WTC11 (cell line): ENCODE measurements at regions of chr19 and their contacts with region 1.

Region 1: DNA sequence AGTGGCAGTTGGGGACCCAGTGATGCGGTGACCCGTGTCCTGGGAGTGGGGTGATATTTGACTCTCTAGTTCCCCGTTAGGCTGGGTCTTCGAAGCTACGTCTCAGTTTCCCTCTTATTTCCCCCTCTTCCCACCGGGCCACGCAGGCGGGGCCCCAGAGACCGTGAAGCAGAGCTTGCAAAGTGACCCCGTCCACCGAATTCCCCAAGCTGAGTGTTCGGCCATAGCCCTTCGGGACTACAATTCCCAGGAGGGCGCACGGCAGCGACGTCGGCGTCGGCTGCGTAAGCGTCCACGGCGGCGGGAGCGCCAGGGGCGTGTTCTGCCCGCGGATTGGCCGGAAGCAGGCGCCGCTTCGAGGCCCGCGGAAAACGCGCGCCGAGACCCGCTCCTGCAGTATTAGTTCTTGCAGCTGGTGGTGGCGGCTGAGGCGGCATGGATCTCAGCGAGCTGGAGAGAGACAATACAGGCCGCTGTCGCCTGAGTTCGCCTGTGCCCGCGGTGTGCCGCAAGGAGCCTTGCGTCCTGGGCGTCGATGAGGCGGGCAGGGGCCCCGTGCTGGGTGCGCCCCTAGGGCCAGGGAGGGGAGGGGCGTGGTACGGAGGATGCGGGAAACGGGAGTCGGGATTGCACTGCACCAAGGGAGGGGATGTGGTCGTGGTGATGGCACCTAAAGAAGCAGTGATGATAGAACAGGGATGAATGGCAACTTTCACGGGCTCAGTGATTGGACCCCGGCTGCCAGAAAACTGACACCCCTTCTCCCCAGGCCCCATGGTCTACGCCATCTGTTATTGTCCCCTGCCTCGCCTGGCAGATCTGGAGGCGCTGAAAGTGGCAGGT is at the start of gene RNASEH2A:
- DNase-seq: peak; percentile 91
- ATAC-seq: peak; percentile 89
- H3K4me3 Mint-ChIP-seq: peak within 1 kb of the TSS; percentile 96
- H3K27ac Mint-ChIP-seq: peak within 1 kb of the TSS; percentile 93
- H3K4me1 Mint-ChIP-seq: peaks cover 18% of the 10 kb centered on the region
- H3K27me3 Mint-ChIP-seq: peaks cover 4% of the 10 kb centered on the region; the same call in 1 of the 2 replicates
- CTCF ChIP-seq: no peak
- total RNA-seq, gene RNASEH2A: 71.3 to 78.2 TPM (median 72.9 TPM) in 3 replicates

Region 2: DNA sequence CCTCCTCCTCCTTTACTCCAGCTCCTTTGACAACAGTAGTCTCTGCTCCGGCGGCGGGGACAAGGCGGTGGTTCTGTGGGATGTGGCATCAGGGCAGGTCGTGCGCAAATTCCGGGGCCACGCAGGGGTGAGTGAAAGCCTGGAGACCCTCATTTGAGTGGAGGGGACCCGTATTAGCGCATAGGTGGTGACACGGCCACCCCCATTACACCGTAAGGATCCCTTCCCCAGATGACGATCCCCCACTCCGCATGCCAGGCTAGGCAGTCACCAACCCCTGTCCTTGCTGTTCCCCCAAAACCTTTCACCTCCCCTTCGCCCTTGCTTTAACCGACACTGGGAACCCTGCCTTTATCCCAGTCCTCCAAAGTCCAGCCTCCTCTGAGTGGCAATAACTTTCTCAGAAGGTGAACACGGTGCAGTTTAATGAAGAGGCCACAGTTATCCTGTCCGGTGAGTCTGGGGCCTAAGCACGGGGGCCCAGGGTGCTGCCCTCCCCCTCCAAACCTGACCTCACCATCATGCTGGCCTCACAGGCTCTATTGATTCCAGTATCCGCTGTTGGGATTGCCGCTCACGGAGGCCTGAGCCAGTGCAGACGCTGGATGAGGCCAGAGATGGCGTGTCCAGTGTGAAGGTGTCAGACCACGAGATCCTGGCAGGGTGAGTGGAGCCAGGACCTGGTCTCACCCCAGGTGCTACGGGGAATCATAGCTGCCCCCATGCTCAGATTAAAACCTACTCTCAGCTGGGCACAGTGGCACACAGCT is 136.1 kb before region 1 on chr19:
- CTCF ChIA-PET with region 1: no interaction called
- POLR2A ChIA-PET with region 1: no interaction called
- DNase-seq: no peak
- ATAC-seq: no peak
- H3K4me3 Mint-ChIP-seq: peak overlapping the region; percentile 98
- H3K27ac Mint-ChIP-seq: peak overlapping the region; percentile 100
- H3K4me1 Mint-ChIP-seq: peaks cover 30% of the 10 kb centered on the region
- H3K27me3 Mint-ChIP-seq: no peaks in the 10 kb centered on the region
- CTCF ChIP-seq: no peak

Region 3: DNA sequence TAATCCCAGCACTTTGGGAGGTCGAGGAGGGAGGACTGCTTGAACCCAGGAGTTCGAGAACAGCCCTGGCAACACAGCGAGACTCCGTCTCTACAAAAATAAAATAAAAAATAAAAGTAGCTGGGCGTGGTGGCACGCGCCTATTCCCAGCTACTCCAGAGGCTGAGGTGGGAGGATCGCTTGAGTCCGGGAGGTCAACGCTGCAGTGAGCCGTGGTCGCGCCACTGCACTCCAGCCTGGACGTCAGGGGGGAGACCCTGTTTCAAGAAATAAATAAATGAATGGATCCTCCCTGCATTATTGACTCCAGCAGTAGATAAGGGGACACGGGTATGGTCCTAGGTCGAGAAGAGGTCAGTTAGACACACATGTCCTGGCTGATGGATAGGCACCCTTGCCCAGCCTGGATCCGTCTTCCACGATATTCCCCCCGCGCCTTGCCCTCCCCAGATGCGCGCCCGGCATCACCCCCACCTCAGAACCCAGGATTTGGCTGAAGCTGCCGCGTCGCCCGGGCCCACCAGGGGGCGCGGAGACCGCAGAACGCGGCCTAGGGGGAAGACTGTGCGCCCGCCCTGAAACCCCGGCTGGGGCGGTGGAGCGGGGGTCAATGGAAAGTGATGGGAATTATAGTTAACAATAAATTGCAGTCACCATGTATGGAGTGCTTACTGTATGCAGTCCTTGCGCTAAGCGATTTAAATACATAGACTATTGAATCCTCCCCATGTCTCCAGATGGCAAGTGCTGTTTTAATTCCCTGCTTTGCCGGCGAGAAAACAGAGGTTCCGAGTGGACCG is 29.0 kb before region 1 on chr19:
- CTCF ChIA-PET with region 1: interaction called, 12 read pairs
- POLR2A ChIA-PET with region 1: interaction called, 3 read pairs
- DNase-seq: peak; percentile 91
- ATAC-seq: peak; percentile 39
- H3K4me3 Mint-ChIP-seq: peak overlapping the region; percentile 79
- H3K27ac Mint-ChIP-seq: peak overlapping the region; percentile 49
- H3K4me1 Mint-ChIP-seq: peaks cover 21% of the 10 kb centered on the region
- H3K27me3 Mint-ChIP-seq: no peaks in the 10 kb centered on the region; the same call in 1 of the 2 replicates
- CTCF ChIP-seq: peak; percentile 74

Region 4: GRCh38 chr19:12789904-12790619 is 16.4 kb before region 1 on chr19:
- CTCF ChIA-PET with region 1: interaction called, 17 read pairs
- POLR2A ChIA-PET with region 1: interaction called, 10 read pairs
- DNase-seq: peak; percentile 98
- ATAC-seq: peak; percentile 63
- H3K4me3 Mint-ChIP-seq: peak overlapping the region; percentile 84
- H3K27ac Mint-ChIP-seq: peak overlapping the region; percentile 79; the same call in 1 of the 2 replicates
- H3K4me1 Mint-ChIP-seq: peaks cover 29% of the 10 kb centered on the region
- H3K27me3 Mint-ChIP-seq: peaks cover 32% of the 10 kb centered on the region
- CTCF ChIP-seq: no peak

Region 5: DNA sequence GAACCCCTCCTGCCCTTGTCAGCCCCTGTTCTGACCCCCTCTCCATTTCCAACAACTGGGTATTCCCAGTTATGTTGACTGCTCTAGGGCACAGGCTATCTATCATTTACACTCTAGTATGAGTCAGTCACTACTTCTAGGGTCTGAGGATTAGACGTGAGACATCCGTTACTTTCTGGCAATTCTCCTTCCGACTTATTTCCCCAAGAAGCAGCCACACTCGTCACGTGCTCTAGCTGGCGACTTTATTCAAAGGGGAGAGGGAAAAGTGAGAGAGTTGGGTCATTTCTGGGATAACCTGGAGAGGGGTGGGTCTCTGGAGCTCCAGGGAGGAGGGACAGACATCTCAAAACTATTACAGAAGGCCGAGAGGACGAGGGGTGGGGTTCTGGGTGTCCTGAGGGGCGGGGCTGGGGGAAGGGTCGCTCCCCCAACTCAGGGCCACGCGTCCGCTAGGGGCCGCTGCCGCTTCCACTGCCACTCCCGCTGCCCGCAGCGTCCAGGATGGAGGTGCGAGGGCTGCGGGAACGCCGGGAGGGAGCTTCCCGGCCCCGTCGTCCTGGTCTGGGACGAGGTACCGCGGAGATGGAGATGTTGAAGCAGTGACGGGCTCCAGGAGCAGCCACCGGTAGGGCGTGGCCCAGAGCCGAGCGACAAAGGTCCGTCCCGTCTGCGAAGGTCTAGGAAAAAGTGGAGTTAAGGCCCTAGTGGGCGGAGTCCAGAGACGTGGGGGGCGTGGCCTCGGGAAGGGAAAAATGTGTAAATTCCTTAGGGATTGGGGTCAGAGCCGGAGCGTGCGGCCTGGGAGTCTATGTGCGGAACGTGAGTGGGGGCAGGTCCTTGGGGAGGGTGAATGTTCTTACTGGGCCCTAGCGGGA is 19.0 kb after region 1 on chr19:
- CTCF ChIA-PET with region 1: interaction called, 17 read pairs
- POLR2A ChIA-PET with region 1: interaction called, 6 read pairs
- DNase-seq: peak; percentile 94
- ATAC-seq: peak; percentile 85
- H3K4me3 Mint-ChIP-seq: peak overlapping the region; percentile 77
- H3K27ac Mint-ChIP-seq: peak overlapping the region; percentile 89
- H3K4me1 Mint-ChIP-seq: peaks cover 21% of the 10 kb centered on the region
- H3K27me3 Mint-ChIP-seq: peaks cover 31% of the 10 kb centered on the region
- CTCF ChIP-seq: peak; percentile 60

Region 6: DNA sequence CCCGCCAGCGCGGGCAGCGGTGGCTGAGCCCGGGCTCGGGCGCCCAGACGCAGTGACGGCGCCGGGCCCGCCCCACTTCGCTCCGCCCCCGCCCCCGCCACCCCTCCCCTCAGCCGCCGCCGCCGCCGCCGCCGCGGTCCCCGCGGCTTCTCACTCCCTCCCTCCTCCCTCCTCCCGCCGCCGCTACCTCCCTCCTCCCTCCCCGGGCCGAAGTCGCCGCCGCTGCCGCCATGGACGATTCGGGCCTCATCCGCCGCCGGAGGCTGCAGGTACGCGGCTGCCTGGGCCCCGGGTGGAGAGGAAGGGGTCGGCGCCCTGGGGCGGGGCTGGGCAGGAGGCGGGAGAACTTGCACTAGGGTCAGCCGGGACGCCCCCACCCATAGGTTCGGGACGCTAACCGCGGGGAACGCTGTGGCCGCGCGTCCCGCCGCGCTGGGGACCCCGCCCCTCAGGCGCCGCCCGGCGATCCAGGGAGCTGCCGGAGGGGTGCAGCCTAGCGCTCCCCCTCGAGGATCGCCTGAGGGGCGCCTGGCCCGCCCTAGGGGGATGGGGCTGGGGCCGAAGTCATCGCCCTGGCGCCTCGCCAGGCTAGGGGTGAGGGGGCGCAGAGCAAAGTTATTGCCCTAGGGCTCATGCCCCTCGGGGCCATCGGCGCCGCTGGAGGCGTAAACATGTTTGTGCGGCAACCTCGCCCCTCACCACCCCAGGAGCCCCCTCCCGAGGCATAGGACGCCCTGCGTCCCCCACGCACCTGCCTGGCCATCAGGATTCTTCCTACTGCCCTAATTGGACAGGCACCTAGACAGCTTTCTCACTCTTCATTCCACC is 27.5 kb after region 1 on chr19:
- CTCF ChIA-PET with region 1: interaction called, 10 read pairs
- POLR2A ChIA-PET with region 1: no interaction called
- DNase-seq: peak; percentile 71
- ATAC-seq: peak; percentile 1; the same call in 1 of the 2 replicates
- H3K4me3 Mint-ChIP-seq: peak overlapping the region; percentile 70
- H3K27ac Mint-ChIP-seq: no peak overlapping the region
- H3K4me1 Mint-ChIP-seq: peaks cover 26% of the 10 kb centered on the region
- H3K27me3 Mint-ChIP-seq: peaks cover 61% of the 10 kb centered on the region
- CTCF ChIP-seq: no peak